Activated CD4-positive, alpha-beta T cell treated with anti-CD3 and anti-CD28 coated beads for 36 hours (primary cell): ENCODE measurements at regions of chr2 and their contacts with region 1.

Region 1: GRCh38 chr2:28894470-28895177 is at the start of gene WDR43:
- DNase-seq: peak; percentile 99
- ATAC-seq: peak; percentile 94
- H3K4me3 Mint-ChIP-seq: peak within 1 kb of the TSS; percentile 97
- H3K27ac Mint-ChIP-seq: peak within 1 kb of the TSS; percentile 95
- H3K4me1 Mint-ChIP-seq: peaks cover 32% of the 10 kb centered on the region
- H3K27me3 Mint-ChIP-seq: no peaks in the 10 kb centered on the region
- total RNA-seq, gene WDR43: 109 to 170 TPM

Region 2: GRCh38 chr2:27663463-27664249 is 1231.0 kb before region 1 on chr2 and contains the starts of genes SLC4A1AP and SUPT7L:
- CTCF ChIA-PET with region 1: no interaction called
- POLR2A ChIA-PET with region 1: no interaction called
- intact Hi-C with region 1: loop called in 1 of 2 experiments (anchors 10 kb)
- DNase-seq: peak; percentile 80
- ATAC-seq: peak; percentile 81
- H3K4me3 Mint-ChIP-seq: peak within 1 kb of the TSS; percentile 98
- H3K27ac Mint-ChIP-seq: peak within 1 kb of the TSS; percentile 100
- H3K4me1 Mint-ChIP-seq: peaks cover 42% of the 10 kb centered on the region
- H3K27me3 Mint-ChIP-seq: no peaks in the 10 kb centered on the region
- total RNA-seq, gene SLC4A1AP: 23.8 to 25.3 TPM
- total RNA-seq, gene SUPT7L: 23.7 to 26.1 TPM

Region 3: GRCh38 chr2:28080911-28081310 is 813.7 kb before region 1 on chr2:
- CTCF ChIA-PET with region 1: no interaction called
- POLR2A ChIA-PET with region 1: no interaction called
- intact Hi-C with region 1: no loop called
- DNase-seq: no peak
- ATAC-seq: no peak
- H3K4me3 Mint-ChIP-seq: no peak overlapping the region
- H3K27ac Mint-ChIP-seq: no peak overlapping the region
- H3K4me1 Mint-ChIP-seq: peaks cover 22% of the 10 kb centered on the region
- H3K27me3 Mint-ChIP-seq: no peaks in the 10 kb centered on the region

Region 4: GRCh38 chr2:28821295-28821958 is 73.2 kb before region 1 on chr2:
- CTCF ChIA-PET with region 1: interaction called, 3 read pairs
- POLR2A ChIA-PET with region 1: no interaction called
- intact Hi-C with region 1: loop called (anchors 1 to 2 kb)
- DNase-seq: peak; percentile 72
- ATAC-seq: peak; percentile 88
- H3K4me3 Mint-ChIP-seq: no peak overlapping the region
- H3K27ac Mint-ChIP-seq: no peak overlapping the region
- H3K4me1 Mint-ChIP-seq: peaks cover 7% of the 10 kb centered on the region
- H3K27me3 Mint-ChIP-seq: peaks cover 2% of the 10 kb centered on the region

Region 5: GRCh38 chr2:29014811-29015421 is 120.3 kb after region 1 on chr2:
- CTCF ChIA-PET with region 1: no interaction called
- POLR2A ChIA-PET with region 1: no interaction called
- intact Hi-C with region 1: loop called in 1 of 2 experiments (anchors 5 kb)
- DNase-seq: peak; percentile 80
- ATAC-seq: peak; percentile 82
- H3K4me3 Mint-ChIP-seq: peak overlapping the region; percentile 75
- H3K27ac Mint-ChIP-seq: peak overlapping the region; percentile 94
- H3K4me1 Mint-ChIP-seq: peaks cover 78% of the 10 kb centered on the region
- H3K27me3 Mint-ChIP-seq: no peaks in the 10 kb centered on the region

Region 6: GRCh38 chr2:29480426-29480825 is 585.8 kb after region 1 on chr2:
- CTCF ChIA-PET with region 1: no interaction called
- POLR2A ChIA-PET with region 1: no interaction called
- intact Hi-C with region 1: no loop called
- DNase-seq: no peak
- ATAC-seq: no peak
- H3K4me3 Mint-ChIP-seq: no peak overlapping the region
- H3K27ac Mint-ChIP-seq: no peak overlapping the region
- H3K4me1 Mint-ChIP-seq: no peaks in the 10 kb centered on the region
- H3K27me3 Mint-ChIP-seq: peaks cover 7% of the 10 kb centered on the region